MCF 10A (cell line): ENCODE measurements at regions of chr20 and their contacts with region 1.

Region 1: DNA sequence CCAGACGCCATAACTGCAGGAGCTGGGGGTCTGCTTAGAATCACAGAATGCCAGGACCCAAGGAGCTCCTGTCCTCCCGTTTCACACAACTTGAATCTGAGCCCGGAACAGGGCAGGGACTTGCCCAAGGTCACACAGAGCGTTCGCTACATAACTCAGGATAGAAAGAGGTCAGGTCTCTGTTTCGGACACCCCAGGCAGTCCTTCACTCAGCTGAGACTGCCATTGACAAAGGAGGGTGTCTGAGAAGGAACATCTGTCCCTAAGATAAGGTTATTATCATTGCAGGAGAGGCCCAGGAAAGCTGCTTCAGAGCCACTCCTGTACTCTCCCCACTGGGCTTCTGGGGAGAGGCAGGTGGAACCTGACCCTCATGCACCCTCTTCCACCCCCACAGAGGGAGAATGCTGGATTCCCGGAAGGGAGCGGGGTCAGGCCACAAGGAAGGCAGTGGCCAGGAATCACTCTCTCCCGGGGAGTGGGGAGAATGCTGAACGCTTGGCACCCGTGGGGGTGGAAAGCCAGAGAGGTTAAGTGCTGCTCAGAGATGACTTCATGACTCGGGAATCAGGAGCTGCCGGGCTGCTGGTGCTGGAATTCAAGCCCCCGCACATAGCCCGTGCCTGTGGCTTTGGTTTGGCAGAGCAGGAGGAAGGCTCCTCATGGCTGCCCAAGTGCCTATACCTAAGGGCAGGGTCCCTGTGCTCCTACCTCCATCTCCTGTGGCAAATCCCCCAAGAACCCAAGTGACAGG is 10.7 kb downstream of the SDC4 start:
- DNase-seq: peak; percentile 66
- H3K4me3 Mint-ChIP-seq: peak overlapping the region; percentile 45
- H3K27ac Mint-ChIP-seq: peak overlapping the region; percentile 97
- H3K4me1 Mint-ChIP-seq: peaks cover 58% of the 10 kb centered on the region
- H3K27me3 Mint-ChIP-seq: no peaks in the 10 kb centered on the region
- CTCF ChIP-seq: no peak

Region 2: GRCh38 chr20:45347936-45348778 is 10.6 kb after region 1 on chr20 and contains the start of gene SDC4:
- CTCF ChIA-PET with region 1: interaction called, 18 read pairs
- POLR2A ChIA-PET with region 1: interaction called, 1,328 read pairs
- intact Hi-C with region 1: no loop called
- DNase-seq: peak; percentile 73
- H3K4me3 Mint-ChIP-seq: peak within 1 kb of the TSS; percentile 89
- H3K27ac Mint-ChIP-seq: peak within 1 kb of the TSS; percentile 93
- H3K4me1 Mint-ChIP-seq: peaks cover 20% of the 10 kb centered on the region
- H3K27me3 Mint-ChIP-seq: no peaks in the 10 kb centered on the region
- CTCF ChIP-seq: no peak
- total RNA-seq, gene SDC4: 180 and 209 TPM in 2 replicates

Region 3: DNA sequence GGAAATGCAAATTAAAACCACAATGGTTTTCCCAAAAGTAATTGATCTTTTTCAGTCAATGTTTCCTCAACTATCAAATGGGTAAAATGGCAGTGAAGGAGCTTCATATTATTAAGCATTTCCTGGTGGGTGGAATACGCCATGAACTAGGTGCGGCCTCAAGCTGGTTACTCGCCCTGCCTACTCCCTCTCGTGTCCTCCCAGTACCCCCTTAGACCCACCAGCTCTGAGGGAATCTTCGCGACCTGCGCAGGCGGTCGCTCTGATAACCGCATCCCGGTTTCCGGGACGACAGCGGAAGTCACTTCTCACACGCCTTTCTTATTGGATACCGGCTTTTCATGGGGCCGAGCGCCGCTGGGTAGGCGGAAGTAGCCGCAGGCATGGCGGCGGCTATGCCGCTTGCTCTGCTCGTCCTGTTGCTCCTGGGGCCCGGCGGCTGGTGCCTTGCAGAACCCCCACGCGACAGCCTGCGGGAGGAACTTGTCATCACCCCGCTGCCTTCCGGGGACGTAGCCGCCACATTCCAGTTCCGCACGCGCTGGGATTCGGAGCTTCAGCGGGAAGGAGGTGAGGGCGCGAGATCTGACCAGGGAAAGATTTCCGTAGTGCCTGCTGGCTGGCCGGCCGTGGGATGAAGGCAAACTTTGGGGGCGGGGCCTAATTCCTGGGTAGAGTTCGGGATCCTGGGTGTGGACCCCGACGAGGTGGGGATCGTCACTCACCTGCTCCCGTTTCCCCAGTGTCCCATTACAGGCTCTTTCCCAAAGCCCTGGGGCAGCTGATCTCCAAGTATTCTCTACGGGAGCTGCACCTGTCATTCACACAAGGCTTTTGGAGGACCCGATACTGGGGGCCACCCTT is 78.5 kb after region 1 on chr20 and contains the start of gene PIGT:
- CTCF ChIA-PET with region 1: interaction called, 4 read pairs
- POLR2A ChIA-PET with region 1: interaction called, 22 read pairs
- intact Hi-C with region 1: no loop called
- DNase-seq: peak; percentile 81
- H3K4me3 Mint-ChIP-seq: peak within 1 kb of the TSS; percentile 90
- H3K27ac Mint-ChIP-seq: peak within 1 kb of the TSS; percentile 93
- H3K4me1 Mint-ChIP-seq: peaks cover 24% of the 10 kb centered on the region
- H3K27me3 Mint-ChIP-seq: no peaks in the 10 kb centered on the region
- CTCF ChIP-seq: no peak
- total RNA-seq, gene PIGT: 79.4 and 84.3 TPM in 2 replicates